ENCODE measurements at regions of chr10 and their contacts with region 1.

Region 1: GRCh38 chr10:30583778-30584415 is 45.7 kb downstream of the LYZL2 start:
- DNase-seq: peak; percentile 29
- ATAC-seq: peak; percentile 59
- H3K4me3 Mint-ChIP-seq: peak overlapping the region; percentile 46
- H3K27ac Mint-ChIP-seq: peak overlapping the region; percentile 36
- H3K4me1 Mint-ChIP-seq: peaks cover 7% of the 10 kb centered on the region
- H3K27me3 Mint-ChIP-seq: peaks cover 5% of the 10 kb centered on the region

Region 2: GRCh38 chr10:30359373-30360206 is 224.3 kb before region 1 on chr10:
- CTCF ChIA-PET with region 1: interaction called, 19 read pairs
- POLR2A ChIA-PET with region 1: no interaction called
- DNase-seq: peak; percentile 75
- ATAC-seq: peak; percentile 92
- H3K4me3 Mint-ChIP-seq: no peak overlapping the region
- H3K27ac Mint-ChIP-seq: no peak overlapping the region
- H3K4me1 Mint-ChIP-seq: peaks cover 7% of the 10 kb centered on the region
- H3K27me3 Mint-ChIP-seq: peaks cover 12% of the 10 kb centered on the region

Region 3: DNA sequence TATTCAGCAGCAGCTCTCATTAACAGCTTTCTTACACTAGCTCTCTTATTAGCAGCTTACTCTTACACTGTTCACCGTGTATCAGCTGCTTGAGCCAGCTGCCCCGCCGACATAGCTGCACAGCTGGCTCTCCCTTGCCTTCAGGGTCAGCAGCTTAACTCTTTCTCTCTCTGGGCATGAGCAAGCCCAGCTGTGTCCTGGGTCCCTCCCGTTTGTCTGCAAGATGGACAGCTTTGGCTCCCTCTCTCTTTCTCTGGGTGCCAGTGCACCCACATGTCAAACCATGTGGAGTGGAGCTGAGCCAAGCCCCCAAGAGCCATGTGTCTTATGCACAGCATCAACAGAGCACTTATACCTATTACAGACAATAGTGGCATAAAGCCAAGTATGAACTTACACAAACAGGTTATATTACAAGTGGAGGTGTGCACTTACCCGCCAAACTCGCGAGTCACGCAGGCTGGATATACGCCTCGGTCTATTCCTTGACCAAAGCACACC is 199.1 kb before region 1 on chr10:
- CTCF ChIA-PET with region 1: interaction called, 15 read pairs
- POLR2A ChIA-PET with region 1: no interaction called
- DNase-seq: peak; percentile 37
- ATAC-seq: no peak
- H3K4me3 Mint-ChIP-seq: no peak overlapping the region
- H3K27ac Mint-ChIP-seq: no peak overlapping the region
- H3K4me1 Mint-ChIP-seq: no peaks in the 10 kb centered on the region
- H3K27me3 Mint-ChIP-seq: peaks cover 26% of the 10 kb centered on the region

Region 4: DNA sequence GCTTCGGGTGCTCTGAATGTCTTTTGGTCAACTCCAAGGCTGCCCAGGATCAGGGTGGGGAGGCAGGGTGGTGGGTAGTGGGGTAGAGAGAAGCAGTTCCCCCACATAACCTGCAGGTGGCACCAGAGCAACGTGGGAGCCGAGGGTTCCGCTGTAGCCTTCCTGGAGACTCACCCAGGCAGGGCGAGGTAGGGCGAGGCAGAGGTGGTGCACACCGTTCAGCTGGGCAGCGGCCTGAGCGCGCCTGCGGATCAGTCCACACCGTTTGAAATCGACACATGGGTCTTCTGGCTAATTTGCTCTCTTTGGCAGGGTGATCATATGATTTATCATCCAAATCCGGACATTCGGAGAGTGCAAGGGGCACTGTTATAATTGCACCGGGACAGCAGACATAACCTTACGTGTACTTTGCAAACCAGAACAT is 191.3 kb before region 1 on chr10:
- CTCF ChIA-PET with region 1: interaction called, 19 read pairs
- POLR2A ChIA-PET with region 1: no interaction called
- DNase-seq: peak; percentile 84
- ATAC-seq: peak; percentile 100
- H3K4me3 Mint-ChIP-seq: peak overlapping the region; percentile 35
- H3K27ac Mint-ChIP-seq: peak overlapping the region; percentile 54
- H3K4me1 Mint-ChIP-seq: peaks cover 16% of the 10 kb centered on the region
- H3K27me3 Mint-ChIP-seq: peaks cover 29% of the 10 kb centered on the region

Region 5: DNA sequence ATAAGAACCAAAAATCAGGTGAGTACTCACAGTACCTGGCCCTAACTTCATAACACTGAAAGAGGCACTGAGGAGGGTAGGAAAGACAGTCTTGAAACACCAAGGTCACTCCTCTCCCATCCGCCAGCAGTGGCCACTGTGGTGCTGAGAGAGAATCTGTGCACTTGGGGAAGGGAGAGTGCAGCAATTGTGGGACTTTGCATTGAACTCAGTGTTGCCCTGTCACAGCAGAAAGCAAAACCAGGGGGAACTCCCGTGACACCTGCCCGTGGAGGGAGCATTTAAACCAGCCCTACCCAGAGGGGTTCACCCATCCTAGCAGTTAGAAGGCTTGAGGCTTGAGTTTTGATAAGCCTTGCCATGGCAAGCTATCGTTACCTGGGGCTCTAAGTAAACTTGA is 185.1 kb before region 1 on chr10:
- CTCF ChIA-PET with region 1: interaction called, 17 read pairs
- POLR2A ChIA-PET with region 1: no interaction called
- DNase-seq: no peak
- ATAC-seq: peak; percentile 38
- H3K4me3 Mint-ChIP-seq: no peak overlapping the region
- H3K27ac Mint-ChIP-seq: no peak overlapping the region
- H3K4me1 Mint-ChIP-seq: peaks cover 45% of the 10 kb centered on the region
- H3K27me3 Mint-ChIP-seq: peaks cover 11% of the 10 kb centered on the region

Region 6: DNA sequence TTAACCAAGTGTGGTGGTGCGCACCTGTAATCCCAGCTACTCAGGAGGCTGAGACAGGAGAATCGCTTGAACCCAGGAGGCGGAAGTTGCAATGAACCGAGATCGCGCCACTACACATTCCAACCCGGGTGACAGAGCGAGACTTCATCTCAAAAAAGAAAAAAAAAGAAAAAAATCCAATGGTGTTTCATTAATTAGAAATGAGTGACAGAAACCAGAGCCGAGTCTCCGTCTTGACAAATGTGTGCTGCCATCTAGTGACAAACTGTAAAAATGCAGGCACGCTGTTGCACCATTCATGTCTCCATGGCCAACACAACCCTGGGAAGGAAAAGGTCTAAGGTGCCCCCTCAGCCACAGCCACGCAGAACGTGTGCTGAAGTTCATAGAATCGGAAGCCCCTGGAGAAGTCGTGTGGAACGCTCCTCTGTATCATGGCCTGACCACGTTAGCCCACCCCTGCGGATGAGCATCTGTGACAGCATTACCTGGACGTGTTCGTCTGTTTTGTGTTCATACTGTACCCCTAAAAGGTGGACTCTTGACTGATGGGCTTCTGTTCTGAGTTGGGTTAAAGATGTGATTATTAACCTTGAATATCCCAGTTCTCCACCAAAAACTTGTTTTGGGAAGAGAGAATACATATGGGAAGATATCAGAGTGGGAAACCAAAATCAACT is 49.3 kb before region 1 on chr10:
- CTCF ChIA-PET with region 1: interaction called, 30 read pairs
- POLR2A ChIA-PET with region 1: no interaction called
- DNase-seq: peak; percentile 86
- ATAC-seq: peak; percentile 48
- H3K4me3 Mint-ChIP-seq: no peak overlapping the region
- H3K27ac Mint-ChIP-seq: no peak overlapping the region
- H3K4me1 Mint-ChIP-seq: peaks cover 59% of the 10 kb centered on the region
- H3K27me3 Mint-ChIP-seq: no peaks in the 10 kb centered on the region

Region 7: DNA sequence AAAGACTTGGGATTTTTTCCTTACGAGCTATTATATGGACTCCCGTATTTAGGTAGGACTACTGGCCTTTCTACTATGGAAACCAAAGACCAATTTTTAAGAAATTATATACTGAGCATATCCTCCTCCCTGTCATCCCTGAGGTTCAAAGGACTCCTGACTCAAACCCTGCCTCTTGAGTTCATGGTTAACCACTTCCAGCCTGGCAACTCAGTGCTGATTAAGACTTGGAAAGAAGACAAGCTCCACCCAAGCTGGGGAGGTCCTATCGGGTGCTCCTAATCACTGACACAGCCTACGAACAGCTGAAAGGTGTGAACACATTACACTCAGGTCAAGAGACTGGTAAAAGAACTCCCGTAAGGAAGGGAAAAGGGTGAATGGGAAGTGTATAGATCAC is 21.1 kb before region 1 on chr10:
- CTCF ChIA-PET with region 1: interaction called, 32 read pairs
- POLR2A ChIA-PET with region 1: no interaction called
- DNase-seq: peak; percentile 53
- ATAC-seq: peak; percentile 68
- H3K4me3 Mint-ChIP-seq: no peak overlapping the region
- H3K27ac Mint-ChIP-seq: no peak overlapping the region
- H3K4me1 Mint-ChIP-seq: peaks cover 10% of the 10 kb centered on the region
- H3K27me3 Mint-ChIP-seq: peaks cover 22% of the 10 kb centered on the region

Region 8: GRCh38 chr10:30619966-30620365 is 36.1 kb after region 1 on chr10:
- CTCF ChIA-PET with region 1: no interaction called
- POLR2A ChIA-PET with region 1: no interaction called
- DNase-seq: no peak
- ATAC-seq: no peak
- H3K4me3 Mint-ChIP-seq: no peak overlapping the region
- H3K27ac Mint-ChIP-seq: no peak overlapping the region
- H3K4me1 Mint-ChIP-seq: no peaks in the 10 kb centered on the region
- H3K27me3 Mint-ChIP-seq: peaks cover 25% of the 10 kb centered on the region

Region 9: GRCh38 chr10:30827531-30828120 is 243.7 kb after region 1 on chr10:
- CTCF ChIA-PET with region 1: no interaction called
- POLR2A ChIA-PET with region 1: no interaction called
- DNase-seq: no peak
- ATAC-seq: no peak
- H3K4me3 Mint-ChIP-seq: no peak overlapping the region
- H3K27ac Mint-ChIP-seq: no peak overlapping the region
- H3K4me1 Mint-ChIP-seq: no peaks in the 10 kb centered on the region
- H3K27me3 Mint-ChIP-seq: peaks cover 2% of the 10 kb centered on the region

Measured in activated CD8-positive, alpha-beta T cell treated with anti-CD3 and anti-CD28 coated beads, Interleukin-2, amount 10 ng/mL, durations not matched to agents 7 days and 5 days (primary cell).